Heart left ventricle (tissue), 16 donors: ENCODE measurements at regions of chr10 and their contacts with region 1.

Region 1: DNA sequence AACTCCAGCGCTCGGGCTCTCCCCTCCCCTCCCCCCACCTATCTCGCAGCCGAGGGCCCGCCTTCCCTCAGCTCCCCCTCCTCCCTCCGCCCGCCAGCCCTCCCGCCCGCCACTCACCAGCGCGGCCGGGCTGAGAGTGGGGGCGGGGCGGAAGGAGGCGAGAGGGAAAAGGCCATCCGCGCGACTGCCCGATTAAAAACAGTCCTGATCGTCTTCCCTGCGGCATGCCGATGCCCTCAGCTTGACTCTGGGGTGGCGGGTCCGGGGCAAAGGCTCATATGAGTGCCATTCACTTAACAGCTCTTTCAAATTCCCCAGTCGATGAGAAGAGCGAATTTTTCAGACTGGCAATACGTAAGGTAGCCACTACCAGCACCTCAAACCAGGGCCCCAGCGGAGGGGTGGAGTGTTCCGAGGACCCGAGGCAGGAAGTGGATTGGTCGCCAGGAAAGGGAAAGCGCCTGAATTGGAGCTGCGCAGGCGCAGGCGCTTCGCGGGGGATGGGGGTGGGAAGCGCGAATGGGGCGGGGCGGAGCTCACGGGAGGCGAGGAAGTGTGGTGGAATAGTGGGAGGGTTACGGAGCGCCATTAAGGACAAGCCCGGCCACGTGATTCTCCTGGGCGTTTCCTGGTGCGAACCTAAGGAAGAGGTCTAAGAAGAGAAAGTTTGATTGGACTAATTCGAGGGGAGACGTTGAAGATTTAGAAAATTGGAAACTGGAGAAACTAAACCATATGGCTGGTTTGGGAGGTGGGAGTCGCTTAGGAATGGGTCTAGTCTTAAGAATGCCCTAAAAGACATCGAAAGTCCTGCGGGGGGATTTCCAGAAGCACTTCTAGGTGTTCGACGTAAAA is at the start of gene UPF2:
- DNase-seq: peak; percentile 99
- ATAC-seq: peak; percentile 96 to 98 (median 97)
- H3K4me3 ChIP-seq: peak within 1 kb of the TSS; percentile 78 to 100 (median 98)
- H3K27ac ChIP-seq: peak within 1 kb of the TSS; percentile 92 to 98 (median 96)
- H3K4me1 ChIP-seq: peaks cover 0 to 32% (median 16%) of the 10 kb centered on the region in 12 donors
- H3K27me3 ChIP-seq: no peaks in the 10 kb centered on the region
- CTCF ChIP-seq: no peak
- POLR2A ChIP-seq: no peak
- total RNA-seq, gene UPF2: 12.3 to 20.9 (median 15.8) TPM

Region 2: DNA sequence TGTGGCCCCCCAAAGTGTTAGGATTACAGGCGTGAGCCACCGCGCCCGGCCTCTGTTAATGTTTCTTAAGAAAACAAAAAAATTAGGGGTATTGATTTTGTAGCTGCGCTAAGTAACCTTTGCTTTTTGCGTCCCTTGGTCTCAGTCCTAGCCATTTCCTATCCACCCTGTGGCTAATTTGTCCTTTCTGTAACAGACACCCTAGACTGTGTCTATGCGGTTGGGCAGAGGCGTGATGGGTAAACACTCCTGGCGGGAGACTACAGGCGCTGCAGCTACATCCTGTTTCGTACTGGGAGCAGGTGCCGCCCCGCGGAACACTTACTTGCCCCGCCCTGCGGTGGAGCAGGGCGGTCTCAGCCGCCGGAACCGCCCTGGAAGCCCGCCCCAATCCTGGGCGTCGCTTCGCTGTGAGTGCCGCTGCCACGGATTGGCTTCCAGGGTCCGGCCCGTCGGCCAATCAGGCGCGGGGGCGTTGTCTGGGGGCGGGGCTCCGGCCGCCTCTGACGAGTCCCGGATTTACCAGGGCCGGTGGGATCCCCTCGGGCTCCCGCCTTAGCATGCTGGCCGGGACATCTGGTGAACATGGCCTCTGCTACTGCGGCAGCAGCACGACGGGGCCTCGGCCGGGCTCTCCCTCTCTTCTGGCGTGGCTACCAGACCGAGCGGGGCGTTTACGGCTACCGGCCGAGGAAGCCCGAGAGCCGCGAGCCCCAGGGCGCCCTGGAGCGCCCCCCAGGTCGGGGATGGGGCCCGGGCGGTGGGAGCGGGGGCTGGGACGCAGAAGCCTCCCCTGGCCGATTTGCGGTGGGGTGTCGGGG is 25.6 kb after region 1 on chr10 and contains the start of gene DHTKD1:
- intact Hi-C with region 1: loop called in 5 of 10 experiments (anchors 1 to 2 kb)
- DNase-seq: peak; percentile 98 to 100 (median 99)
- ATAC-seq: peak; percentile 99 to 100 (median 100)
- H3K4me3 ChIP-seq: peak within 1 kb of the TSS; percentile 59 to 100 (median 86)
- H3K27ac ChIP-seq: peak within 1 kb of the TSS in 11 of 12 donors; percentile 64 to 92 (median 86)
- H3K4me1 ChIP-seq: peaks cover 0 to 17% (median 8%) of the 10 kb centered on the region in 12 donors
- H3K27me3 ChIP-seq: no peaks in the 10 kb centered on the region
- CTCF ChIP-seq: peak in 11 of 12 donors; percentile 29 to 62 (median 47)
- POLR2A ChIP-seq: peak in 1 of 2 donors; percentile 73
- total RNA-seq, gene DHTKD1: 14.0 to 44.3 (median 31.4) TPM

Region 3: GRCh38 chr10:12499076-12499986 is 456.3 kb after region 1 on chr10:
- intact Hi-C with region 1: no loop called
- DNase-seq: no peak
- ATAC-seq: peak in 2 of 4 donors; percentile 44 to 60
- H3K4me3 ChIP-seq: no peak overlapping the region
- H3K27ac ChIP-seq: peak overlapping the region in 2 of 12 donors; percentile 8 to 39
- H3K4me1 ChIP-seq: peaks cover 4 to 32% (median 15%) of the 10 kb centered on the region in 12 donors
- H3K27me3 ChIP-seq: no peaks in the 10 kb centered on the region
- CTCF ChIP-seq: no peak
- POLR2A ChIP-seq: no peak